Right ventricle myocardium inferior (tissue), 1 donor: ENCODE measurements at regions of chr17 and their contacts with region 1.

Region 1: GRCh38 chr17:19250421-19251173 is 13.4 kb downstream of the EPN2 start:
- DNase-seq: no peak
- ATAC-seq: peak; percentile 88

Region 2: DNA sequence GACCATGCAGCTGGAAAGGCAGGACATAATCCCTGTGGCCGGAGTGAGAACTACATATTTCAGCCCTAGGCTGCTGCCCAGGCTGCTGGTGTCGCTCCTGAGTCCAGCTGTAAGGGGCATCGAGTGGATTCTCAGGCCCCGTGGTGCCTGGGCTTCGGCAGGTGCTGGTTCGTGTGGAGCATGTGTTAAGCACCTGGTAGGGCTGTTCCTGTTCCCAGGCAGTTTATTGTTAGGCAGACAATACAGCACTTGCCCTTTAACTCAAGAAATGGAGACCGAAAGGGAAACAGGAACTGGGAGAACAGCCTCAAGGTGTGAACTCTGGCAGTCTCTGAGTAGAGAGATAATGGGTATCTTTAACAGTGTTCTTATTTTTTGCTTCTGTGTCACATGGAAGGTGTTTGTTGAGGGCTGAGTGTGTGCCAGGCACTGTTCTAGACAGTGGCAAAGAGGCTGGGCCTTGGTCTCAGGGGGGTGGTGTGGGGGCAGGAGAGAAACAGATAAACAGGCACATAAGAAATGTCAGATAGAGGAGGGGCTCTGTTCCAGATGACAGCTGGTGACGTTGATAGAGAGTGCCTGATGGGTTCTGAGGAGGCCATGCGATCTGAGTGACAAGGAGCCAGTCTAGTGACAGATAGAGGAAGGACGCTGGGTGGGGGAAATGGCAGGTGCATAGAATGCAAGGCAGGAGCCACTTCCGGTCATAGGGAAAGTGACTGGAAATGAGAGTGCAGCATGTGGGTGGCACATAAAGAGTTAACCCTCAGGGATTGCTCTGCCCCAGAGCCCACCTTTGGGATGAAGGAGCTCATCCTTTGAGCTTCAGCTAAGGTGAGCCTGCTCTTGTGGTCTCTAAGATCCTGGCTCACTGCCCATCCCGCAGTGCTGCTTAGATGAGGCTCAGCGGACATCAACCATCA is 20.4 kb after region 1 on chr17:
- intact Hi-C with region 1: loop called (anchors 2 kb)
- DNase-seq: peak; percentile 75
- ATAC-seq: peak; percentile 84

Region 3: DNA sequence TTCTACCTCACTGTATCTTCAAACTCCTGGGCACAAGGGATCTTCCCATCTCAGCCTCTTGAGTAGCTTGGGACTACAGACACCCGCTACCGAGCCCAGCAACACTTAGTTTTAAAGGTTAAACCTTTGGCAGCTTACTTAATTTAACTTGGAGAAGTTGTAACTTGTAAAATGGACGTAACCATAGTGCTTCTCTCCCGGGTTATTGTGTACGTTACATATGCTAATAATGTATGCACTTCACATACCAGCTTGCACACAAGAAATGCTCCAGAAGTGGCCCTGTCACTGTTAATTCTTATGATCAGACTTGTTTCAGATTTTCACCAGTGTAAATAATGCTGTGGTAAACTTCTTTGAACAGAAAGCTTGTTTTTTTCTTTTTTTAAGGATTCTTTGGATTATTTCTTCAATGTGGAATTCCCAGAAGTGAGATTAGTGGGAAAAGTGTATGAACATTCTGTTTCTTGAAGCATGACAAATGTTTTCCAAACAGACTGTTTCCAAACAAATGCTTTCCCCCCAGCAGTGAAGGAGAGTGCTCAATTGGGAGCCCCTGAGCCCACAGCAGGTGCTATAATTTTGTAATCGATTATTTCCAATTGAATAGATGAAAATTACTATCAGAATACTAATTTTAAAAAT is 48.1 kb after region 1 on chr17:
- intact Hi-C with region 1: loop called (anchors 2 kb)
- DNase-seq: no peak
- ATAC-seq: peak; percentile 18

Region 4: GRCh38 chr17:19311421-19312215 is 61.0 kb after region 1 on chr17:
- intact Hi-C with region 1: no loop called
- DNase-seq: no peak
- ATAC-seq: peak; percentile 12